Activated CD4-positive, alpha-beta T cell treated with anti-CD3 and anti-CD28 coated beads, Interleukin-2, amount 10 ng/mL, durations not matched to agents 24 days and 14 days (primary cell): ENCODE measurements at regions of chr1 and their contacts with region 1.

Region 1: GRCh38 chr1:101025657-101026504 is at the start of gene DPH5:
- DNase-seq: peak; percentile 97
- H3K4me3 Mint-ChIP-seq: peak within 1 kb of the TSS; percentile 100
- H3K27ac Mint-ChIP-seq: peak within 1 kb of the TSS; percentile 98
- H3K4me1 Mint-ChIP-seq: peaks cover 42% of the 10 kb centered on the region
- H3K27me3 Mint-ChIP-seq: no peaks in the 10 kb centered on the region
- total RNA-seq, gene DPH5: 37.5 and 41.0 TPM in 2 replicates

Region 2: GRCh38 chr1:100928128-100928527 is 97.8 kb before region 1 on chr1:
- intact Hi-C with region 1: loop called (anchors 5 kb)
- DNase-seq: peak; percentile 66
- H3K4me3 Mint-ChIP-seq: no peak overlapping the region
- H3K27ac Mint-ChIP-seq: no peak overlapping the region
- H3K4me1 Mint-ChIP-seq: peaks cover 44% of the 10 kb centered on the region
- H3K27me3 Mint-ChIP-seq: no peaks in the 10 kb centered on the region

Region 3: DNA sequence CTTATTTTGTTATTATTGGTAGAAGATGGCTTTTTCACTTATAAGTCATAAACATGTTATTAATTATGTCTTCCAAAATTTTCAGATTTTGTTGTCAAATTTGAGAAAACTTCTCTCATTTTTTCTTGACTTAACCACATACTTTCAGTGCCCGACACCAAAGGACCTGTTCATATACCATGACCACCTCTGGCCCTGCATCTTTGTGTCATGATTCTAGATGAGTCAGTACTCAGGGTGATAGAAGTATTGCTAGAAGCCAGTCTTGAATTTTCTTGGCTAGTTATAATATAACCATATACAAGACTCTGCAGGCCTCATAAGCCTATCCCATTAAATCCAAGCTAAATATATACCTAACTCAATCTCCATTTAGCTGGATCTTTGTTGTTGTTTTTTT is 35.1 kb after region 1 on chr1:
- intact Hi-C with region 1: no loop called
- DNase-seq: no peak
- H3K4me3 Mint-ChIP-seq: no peak overlapping the region
- H3K27ac Mint-ChIP-seq: no peak overlapping the region
- H3K4me1 Mint-ChIP-seq: peaks cover 8% of the 10 kb centered on the region
- H3K27me3 Mint-ChIP-seq: no peaks in the 10 kb centered on the region

Region 4: DNA sequence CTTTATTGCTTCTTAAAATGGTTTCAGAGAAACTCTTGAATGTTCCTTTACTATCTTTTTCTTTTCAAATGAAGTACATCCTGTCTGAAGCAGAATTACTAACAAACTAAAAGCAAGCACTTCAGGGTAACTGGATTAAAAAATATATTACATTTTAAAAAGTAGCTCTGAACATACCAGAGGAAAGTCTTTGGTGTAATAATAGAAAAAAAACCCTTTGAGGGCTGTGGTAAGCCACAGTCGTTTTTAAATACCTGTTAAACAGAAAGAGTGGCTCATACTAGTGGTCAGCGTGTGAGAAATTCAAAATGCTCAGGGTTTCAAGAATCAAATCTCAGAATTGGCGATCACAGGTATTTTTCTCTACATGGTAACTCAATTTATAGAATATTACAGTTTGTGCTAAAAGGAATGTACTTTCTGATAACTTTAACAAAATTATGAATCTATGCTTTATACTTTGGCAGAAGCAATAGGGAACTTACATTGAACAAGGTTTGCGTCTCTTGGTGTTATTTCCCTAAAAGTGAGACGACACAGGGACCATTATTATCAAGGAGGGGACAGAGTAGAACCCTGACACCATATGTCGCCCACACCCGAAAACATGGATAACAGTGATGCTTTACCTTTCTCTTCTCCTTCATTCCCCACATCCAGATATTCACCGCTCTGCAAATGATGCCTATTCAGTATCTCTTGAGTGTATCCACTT is 96.7 kb after region 1 on chr1:
- intact Hi-C with region 1: loop called (anchors 5 kb)
- DNase-seq: no peak
- H3K4me3 Mint-ChIP-seq: peak overlapping the region; percentile 41
- H3K27ac Mint-ChIP-seq: peak overlapping the region; percentile 52
- H3K4me1 Mint-ChIP-seq: peaks cover 34% of the 10 kb centered on the region
- H3K27me3 Mint-ChIP-seq: no peaks in the 10 kb centered on the region

Region 5: DNA sequence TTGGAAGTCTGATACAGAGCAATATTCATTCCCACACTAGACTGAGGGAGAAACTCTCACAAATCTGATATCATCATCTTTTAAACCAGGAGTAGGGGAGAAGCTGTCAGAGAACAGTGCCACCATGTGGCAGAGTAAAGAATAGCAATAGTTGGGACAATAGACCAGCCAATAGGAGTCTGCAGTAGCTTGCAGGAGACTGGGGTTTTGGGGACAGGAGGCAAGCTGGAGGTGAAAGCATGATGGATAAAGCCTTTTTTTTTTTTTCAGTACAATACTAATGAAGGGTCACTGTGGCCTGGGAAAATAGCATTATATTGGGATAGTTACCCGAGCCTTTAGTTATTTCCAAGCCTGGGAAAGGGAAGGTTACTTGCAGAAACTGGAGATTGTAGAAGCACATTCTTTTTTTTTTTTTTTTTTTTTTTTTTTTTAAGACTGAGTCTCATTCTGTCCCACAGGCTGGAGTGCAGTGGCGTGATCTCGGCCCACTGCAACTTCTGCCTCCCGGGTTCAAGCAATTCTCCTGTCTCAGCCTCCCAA is 331.6 kb after region 1 on chr1:
- intact Hi-C with region 1: loop called (anchors 10 kb)
- DNase-seq: peak; percentile 94
- H3K4me3 Mint-ChIP-seq: no peak overlapping the region
- H3K27ac Mint-ChIP-seq: no peak overlapping the region
- H3K4me1 Mint-ChIP-seq: peaks cover 7% of the 10 kb centered on the region
- H3K27me3 Mint-ChIP-seq: peaks cover 36% of the 10 kb centered on the region